ENCODE measurements at regions of chr12 and their contacts with region 1.

Region 1: GRCh38 chr12:54251667-54252284 is 28.1 kb downstream of the CBX5 start:
- DNase-seq: no peak
- ATAC-seq: peak; percentile 91
- H3K4me3 ChIP-seq: no peak overlapping the region
- H3K27ac ChIP-seq: no peak overlapping the region
- H3K4me1 ChIP-seq: no peaks in the 10 kb centered on the region
- H3K27me3 ChIP-seq: no peaks in the 10 kb centered on the region
- CTCF ChIP-seq: peak; percentile 53 to 67 (median 64); a peak in 5 of 6 replicates
- EP300 ChIP-seq: no peak
- POLR2A ChIP-seq: no peak
- RAD21 ChIP-seq: peak; percentile 63

Region 2: DNA sequence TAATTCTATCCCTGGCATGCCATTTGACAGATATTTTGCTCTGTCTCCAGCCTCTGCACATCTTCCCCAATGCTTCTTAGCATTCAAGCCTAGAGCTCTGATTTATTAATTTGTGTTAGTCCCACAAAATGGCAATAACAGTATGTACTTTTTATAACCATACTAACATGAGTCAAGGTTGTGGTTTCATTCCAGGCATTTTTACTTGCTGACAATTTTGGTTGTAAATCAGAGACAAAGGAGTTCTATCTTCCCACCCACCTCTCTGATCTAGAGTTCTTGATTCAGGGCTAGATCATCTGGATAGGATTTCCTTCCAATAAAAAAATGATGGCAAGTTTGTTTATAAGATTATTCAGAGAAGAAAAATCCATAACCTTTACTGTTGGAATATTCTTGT is 481.5 kb before region 1 on chr12:
- CTCF ChIA-PET with region 1: no interaction called
- POLR2A ChIA-PET with region 1: no interaction called
- RAD21 ChIA-PET with region 1: no interaction called
- SMC1A ChIA-PET with region 1: no interaction called
- in situ Hi-C with region 1: no loop called
- intact Hi-C with region 1: no loop called
- DNase-seq: no peak
- ATAC-seq: no peak
- H3K4me3 ChIP-seq: no peak overlapping the region
- H3K27ac ChIP-seq: no peak overlapping the region
- H3K4me1 ChIP-seq: no peaks in the 10 kb centered on the region
- H3K27me3 ChIP-seq: no peaks in the 10 kb centered on the region
- CTCF ChIP-seq: no peak
- EP300 ChIP-seq: no peak
- POLR2A ChIP-seq: no peak
- RAD21 ChIP-seq: no peak

Region 3: DNA sequence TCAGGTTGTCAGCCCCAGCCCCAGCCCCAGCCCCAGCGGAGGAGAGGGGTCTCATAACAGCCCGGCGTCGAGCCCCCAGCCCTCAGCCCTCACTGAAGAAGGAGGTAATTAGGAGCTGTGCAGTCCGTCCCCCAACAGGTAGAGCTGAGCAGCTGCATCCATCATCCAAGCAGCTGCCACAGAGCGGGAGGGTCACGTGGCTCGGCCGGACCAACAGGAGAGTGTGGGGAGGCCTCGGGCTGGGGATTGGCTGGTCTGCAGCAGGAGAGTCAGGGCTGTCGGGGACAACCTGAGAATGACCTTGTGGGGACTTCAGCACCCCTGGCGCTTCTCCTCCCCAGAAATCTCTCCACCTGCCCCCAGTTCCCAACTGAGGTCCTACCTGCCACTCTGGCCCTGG is 92.6 kb before region 1 on chr12:
- CTCF ChIA-PET with region 1: no interaction called
- POLR2A ChIA-PET with region 1: no interaction called
- RAD21 ChIA-PET with region 1: no interaction called
- SMC1A ChIA-PET with region 1: no interaction called
- in situ Hi-C with region 1: no loop called
- intact Hi-C with region 1: no loop called
- DNase-seq: peak; percentile 7
- ATAC-seq: peak; percentile 100
- H3K4me3 ChIP-seq: no peak overlapping the region
- H3K27ac ChIP-seq: no peak overlapping the region
- H3K4me1 ChIP-seq: no peaks in the 10 kb centered on the region; the same call in 1 of the 2 replicates
- H3K27me3 ChIP-seq: no peaks in the 10 kb centered on the region; a peak in 1 of 4 replicates
- CTCF ChIP-seq: 0 out of 6 replicates have a peak, but pooled peaks of 1 of the 3 experiments have one; percentile 18
- EP300 ChIP-seq: no peak
- POLR2A ChIP-seq: no peak
- RAD21 ChIP-seq: no peak

Region 4: GRCh38 chr12:54195080-54195736 is 56.6 kb before region 1 on chr12:
- CTCF ChIA-PET with region 1: no interaction called
- POLR2A ChIA-PET with region 1: no interaction called
- RAD21 ChIA-PET with region 1: no interaction called
- SMC1A ChIA-PET with region 1: no interaction called
- in situ Hi-C with region 1: no loop called
- intact Hi-C with region 1: no loop called
- DNase-seq: no peak
- ATAC-seq: no peak
- H3K4me3 ChIP-seq: no peak overlapping the region
- H3K27ac ChIP-seq: no peak overlapping the region
- H3K4me1 ChIP-seq: peaks cover 21% of the 10 kb centered on the region
- H3K27me3 ChIP-seq: peaks cover 2 to 3% of the 10 kb centered on the region in 2 experiments; a peak in 1 of 4 replicates
- CTCF ChIP-seq: no peak
- EP300 ChIP-seq: no peak
- POLR2A ChIP-seq: no peak
- RAD21 ChIP-seq: no peak

Region 5: GRCh38 chr12:54220092-54220557 is 31.7 kb before region 1 on chr12:
- CTCF ChIA-PET with region 1: interaction called, 26 read pairs
- POLR2A ChIA-PET with region 1: no interaction called
- RAD21 ChIA-PET with region 1: interaction called, 5 read pairs
- SMC1A ChIA-PET with region 1: interaction called, 10 read pairs
- in situ Hi-C with region 1: no loop called
- intact Hi-C with region 1: no loop called
- DNase-seq: no peak
- ATAC-seq: peak; percentile 58
- H3K4me3 ChIP-seq: no peak overlapping the region
- H3K27ac ChIP-seq: no peak overlapping the region
- H3K4me1 ChIP-seq: peaks cover 30% of the 10 kb centered on the region
- H3K27me3 ChIP-seq: peaks cover 0 to 1% of the 10 kb centered on the region in 2 experiments; a peak in 1 of 4 replicates
- CTCF ChIP-seq: peak; percentile 84 to 90 (median 90)
- EP300 ChIP-seq: no peak
- POLR2A ChIP-seq: no peak
- RAD21 ChIP-seq: peak; percentile 87

Region 6: GRCh38 chr12:54265364-54265812 is 13.6 kb after region 1 on chr12:
- CTCF ChIA-PET with region 1: interaction called, 49 read pairs
- POLR2A ChIA-PET with region 1: interaction called, 9 read pairs
- RAD21 ChIA-PET with region 1: interaction called, 6 read pairs
- SMC1A ChIA-PET with region 1: interaction called, 19 read pairs
- in situ Hi-C with region 1: no loop called
- intact Hi-C with region 1: no loop called
- DNase-seq: no peak
- ATAC-seq: no peak
- H3K4me3 ChIP-seq: no peak overlapping the region
- H3K27ac ChIP-seq: no peak overlapping the region
- H3K4me1 ChIP-seq: peaks cover 6% of the 10 kb centered on the region
- H3K27me3 ChIP-seq: no peaks in the 10 kb centered on the region
- CTCF ChIP-seq: no peak
- EP300 ChIP-seq: no peak
- POLR2A ChIP-seq: no peak
- RAD21 ChIP-seq: no peak

Region 7: DNA sequence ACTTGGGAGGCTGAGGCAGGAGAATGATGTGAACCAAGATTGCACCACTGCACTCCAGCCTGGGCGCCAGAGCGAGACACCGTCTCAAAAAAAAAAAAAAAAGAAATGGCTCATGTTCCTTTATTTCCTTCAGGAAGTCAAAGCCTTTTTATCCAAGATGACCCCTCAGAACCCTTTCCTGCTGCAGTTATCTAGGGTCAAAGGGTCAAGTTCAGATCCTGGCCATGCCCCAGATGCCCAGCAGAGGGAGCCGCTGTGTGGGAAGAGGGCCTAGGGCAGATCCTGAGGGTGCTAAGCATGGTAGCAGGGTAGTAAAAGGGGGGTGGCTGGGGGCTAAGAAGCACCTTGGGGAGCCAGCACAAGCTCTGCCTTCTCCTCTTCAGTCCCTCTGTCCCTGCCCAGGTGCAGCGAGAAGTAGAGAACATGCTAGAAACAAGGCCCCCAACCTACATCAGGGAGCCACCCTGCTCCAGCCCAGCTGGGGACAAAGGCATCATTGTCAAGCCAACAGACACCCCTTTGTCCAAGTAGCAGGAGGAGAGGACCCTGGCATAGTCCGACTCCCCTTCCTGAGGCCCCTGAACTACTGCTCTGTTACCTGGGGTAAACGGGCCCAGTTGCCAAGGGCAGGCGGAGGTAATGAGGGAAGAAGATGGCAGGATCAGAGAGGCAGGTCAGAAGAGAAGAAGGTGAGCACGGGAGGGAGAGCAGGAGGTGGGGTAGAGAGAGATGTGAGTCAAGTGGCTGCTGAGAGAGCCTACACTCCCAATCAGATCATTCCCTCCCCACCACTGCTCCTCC is 42.6 kb after region 1 on chr12:
- CTCF ChIA-PET with region 1: interaction called, 63 read pairs
- POLR2A ChIA-PET with region 1: interaction called, 3 read pairs
- RAD21 ChIA-PET with region 1: interaction called, 7 read pairs
- SMC1A ChIA-PET with region 1: interaction called, 12 read pairs
- in situ Hi-C with region 1: no loop called
- intact Hi-C with region 1: no loop called
- DNase-seq: no peak
- ATAC-seq: peak; percentile 81
- H3K4me3 ChIP-seq: no peak overlapping the region
- H3K27ac ChIP-seq: no peak overlapping the region
- H3K4me1 ChIP-seq: no peaks in the 10 kb centered on the region
- H3K27me3 ChIP-seq: peaks cover 0 to 4% of the 10 kb centered on the region in 2 experiments
- CTCF ChIP-seq: peak; percentile 74 to 94 (median 91)
- EP300 ChIP-seq: no peak
- POLR2A ChIP-seq: no peak
- RAD21 ChIP-seq: peak; percentile 86

Region 8: DNA sequence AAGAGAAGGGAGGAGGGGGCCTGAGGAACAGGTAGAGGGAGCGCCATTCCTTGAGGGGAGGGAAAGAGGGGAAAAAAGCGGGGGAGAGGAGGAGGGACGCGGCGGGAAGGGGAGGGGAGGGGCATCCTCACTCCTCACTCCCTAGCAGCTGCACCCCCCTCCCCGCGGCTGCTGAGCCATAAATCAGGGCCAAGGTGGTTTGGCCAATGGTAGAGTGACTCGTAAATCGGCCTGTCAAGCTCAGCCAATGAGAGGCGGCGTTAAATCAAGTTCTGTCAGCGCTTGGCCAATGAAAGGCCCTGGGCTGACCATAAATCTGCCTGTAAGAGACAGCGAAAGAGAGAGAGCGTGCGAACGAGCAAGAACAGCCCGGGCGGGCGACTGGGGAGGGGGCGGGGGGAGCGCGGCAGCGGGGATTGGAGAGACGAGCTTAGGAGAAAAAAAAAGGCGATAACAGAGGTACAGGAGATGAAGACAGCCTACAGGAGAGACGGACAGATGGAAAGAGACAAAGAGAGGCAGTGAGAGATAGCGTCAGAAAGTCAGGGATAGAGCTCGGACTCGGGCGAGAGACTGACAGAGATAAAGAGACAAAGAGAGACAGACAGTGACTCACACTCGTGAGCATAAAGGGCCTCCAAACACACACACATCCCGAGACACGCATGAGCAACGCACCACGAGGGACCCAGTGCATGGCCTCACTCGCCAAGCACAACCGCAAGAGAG is 107.4 kb after region 1 on chr12:
- CTCF ChIA-PET with region 1: interaction called, 68 read pairs
- POLR2A ChIA-PET with region 1: interaction called, 5 read pairs
- RAD21 ChIA-PET with region 1: interaction called, 7 read pairs
- SMC1A ChIA-PET with region 1: interaction called, 6 read pairs
- in situ Hi-C with region 1: no loop called
- intact Hi-C with region 1: no loop called
- DNase-seq: peak; percentile 97
- ATAC-seq: peak; percentile 96
- H3K4me3 ChIP-seq: peak overlapping the region; percentile 84
- H3K27ac ChIP-seq: peak overlapping the region; percentile 92
- H3K4me1 ChIP-seq: peaks cover 23% of the 10 kb centered on the region
- H3K27me3 ChIP-seq: no peaks in the 10 kb centered on the region
- CTCF ChIP-seq: no peak
- EP300 ChIP-seq: peak in 1 of 2 experiments; percentile 55; a peak in 2 of 4 replicates
- POLR2A ChIP-seq: peak; percentile 63
- RAD21 ChIP-seq: no peak

Region 9: DNA sequence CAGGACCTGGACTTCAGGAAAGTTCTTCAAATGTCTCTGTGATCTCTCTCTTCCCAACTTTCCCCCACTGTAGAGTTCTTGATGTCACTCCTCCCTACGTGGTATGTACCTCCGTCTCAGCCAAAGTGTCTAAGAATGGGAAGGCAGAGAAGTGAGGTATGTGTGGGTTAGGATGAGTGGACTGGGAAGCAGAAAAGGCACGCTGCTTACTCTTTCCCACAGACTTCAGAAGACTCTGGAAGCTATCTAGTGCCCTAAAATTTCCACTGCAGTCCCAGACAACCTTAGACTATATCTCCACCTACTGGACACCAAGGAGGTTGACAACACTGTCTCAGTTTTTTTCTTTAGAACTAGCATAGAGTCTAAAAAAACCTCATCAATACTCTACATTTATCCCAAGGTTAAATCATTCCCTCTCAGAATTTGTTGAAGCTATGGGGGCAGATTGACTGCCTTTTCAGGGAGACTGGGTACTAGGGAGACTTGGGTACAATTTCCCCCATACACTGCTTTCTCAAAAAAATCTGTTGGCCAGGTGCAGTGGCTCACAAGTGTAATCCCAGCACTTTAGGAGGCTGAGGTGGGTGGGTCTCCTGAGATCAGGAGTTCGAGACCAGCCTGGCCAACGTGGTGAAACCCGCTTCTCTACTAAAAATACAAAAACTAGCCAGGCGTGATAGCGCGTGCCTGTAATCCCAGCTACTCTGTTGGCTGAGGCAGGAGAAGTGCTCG is 187.9 kb after region 1 on chr12:
- CTCF ChIA-PET with region 1: interaction called, 14 read pairs
- POLR2A ChIA-PET with region 1: no interaction called
- RAD21 ChIA-PET with region 1: no interaction called
- SMC1A ChIA-PET with region 1: no interaction called
- in situ Hi-C with region 1: no loop called
- intact Hi-C with region 1: no loop called
- DNase-seq: no peak
- ATAC-seq: peak; percentile 72
- H3K4me3 ChIP-seq: no peak overlapping the region
- H3K27ac ChIP-seq: no peak overlapping the region
- H3K4me1 ChIP-seq: 0 out of 2 replicates have a peak, but pooled peaks cover 7% of the 10 kb centered on the region
- H3K27me3 ChIP-seq: no peaks in the 10 kb centered on the region; a peak in 1 of 4 replicates
- CTCF ChIP-seq: peak; percentile 76 to 85 (median 77)
- EP300 ChIP-seq: no peak
- POLR2A ChIP-seq: no peak
- RAD21 ChIP-seq: peak; percentile 92

Measured in GM12878 (cell line).